ENCODE measurements at regions of chr1 and their contacts with region 1.

Region 1: DNA sequence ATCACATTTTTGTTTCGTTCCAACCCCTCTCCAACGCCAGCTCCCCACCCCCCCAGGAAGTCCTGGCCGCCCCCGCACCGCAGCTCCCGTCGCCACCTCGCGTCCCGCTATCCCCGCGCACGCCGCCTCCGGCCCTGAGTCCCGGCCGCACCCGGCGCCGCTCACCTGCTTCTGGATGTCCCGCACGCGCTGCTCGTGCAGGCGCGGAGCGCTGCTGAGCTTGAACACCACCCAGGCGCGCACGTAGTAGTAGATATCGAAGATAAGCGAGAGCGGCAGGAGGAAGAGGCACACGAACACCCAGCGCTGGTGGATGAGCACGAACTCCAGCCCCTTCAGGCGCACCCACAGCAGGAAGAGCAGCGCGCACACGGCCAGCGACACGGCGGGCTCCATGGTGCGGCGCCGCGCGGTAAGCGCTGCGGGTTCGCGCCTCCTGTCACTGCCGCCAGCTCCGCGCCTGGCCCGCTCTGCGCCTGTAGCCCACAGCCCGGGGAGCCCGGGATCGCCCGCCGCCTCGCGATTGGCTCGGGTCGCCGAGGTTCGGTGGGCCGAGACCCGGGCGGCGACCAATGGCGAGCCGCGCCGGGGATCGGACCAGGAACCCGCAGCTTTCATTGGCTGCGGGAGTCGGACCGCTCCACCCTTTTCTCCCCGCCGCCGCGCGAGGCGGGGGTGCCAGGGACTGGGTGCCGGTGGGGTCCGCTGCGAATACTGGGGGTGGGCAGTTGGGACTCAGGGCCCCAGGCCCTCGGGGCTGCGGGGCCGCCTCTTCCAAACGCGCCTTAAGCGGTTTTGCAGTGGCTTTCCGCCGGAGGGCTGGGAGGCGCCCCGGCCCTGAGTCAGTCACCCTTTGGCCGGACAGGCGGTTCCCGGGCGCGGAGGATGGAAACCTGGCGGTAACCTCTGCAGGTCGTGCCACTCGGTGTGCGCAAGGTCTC is at the start of gene DHCR24:
- DNase-seq: peak; percentile 90
- ATAC-seq: peak; percentile 79
- H3K4me3 ChIP-seq: peak within 1 kb of the TSS; percentile 90
- H3K27ac ChIP-seq: peak within 1 kb of the TSS; percentile 96
- H3K4me1 ChIP-seq: peaks cover 49% of the 10 kb centered on the region
- H3K27me3 ChIP-seq: no peaks in the 10 kb centered on the region
- CTCF ChIP-seq: no peak
- total RNA-seq, gene DHCR24: 166 TPM in 2 replicates

Region 2: GRCh38 chr1:54857741-54858627 is 29.0 kb before region 1 on chr1:
- CTCF ChIA-PET with region 1: interaction called, 3 read pairs
- POLR2A ChIA-PET with region 1: no interaction called
- intact Hi-C with region 1: loop called (anchors 2 kb)
- DNase-seq: peak; percentile 89
- ATAC-seq: peak; percentile 73
- H3K4me3 ChIP-seq: no peak overlapping the region
- H3K27ac ChIP-seq: peak overlapping the region; percentile 89
- H3K4me1 ChIP-seq: peaks cover 49% of the 10 kb centered on the region
- H3K27me3 ChIP-seq: no peaks in the 10 kb centered on the region
- CTCF ChIP-seq: no peak

Region 3: GRCh38 chr1:54872036-54872331 is 15.0 kb before region 1 on chr1:
- CTCF ChIA-PET with region 1: no interaction called
- POLR2A ChIA-PET with region 1: no interaction called
- intact Hi-C with region 1: loop called (anchors 1 kb)
- DNase-seq: no peak
- ATAC-seq: no peak
- H3K4me3 ChIP-seq: no peak overlapping the region
- H3K27ac ChIP-seq: no peak overlapping the region
- H3K4me1 ChIP-seq: peaks cover 48% of the 10 kb centered on the region
- H3K27me3 ChIP-seq: no peaks in the 10 kb centered on the region
- CTCF ChIP-seq: no peak; the same call in 1 of the 2 replicates

Region 4: GRCh38 chr1:54934869-54935268 is 47.9 kb after region 1 on chr1:
- CTCF ChIA-PET with region 1: interaction called, 5 read pairs
- POLR2A ChIA-PET with region 1: interaction called, 4 read pairs
- intact Hi-C with region 1: loop called (anchors 1 kb)
- DNase-seq: peak; percentile 89
- ATAC-seq: peak; percentile 97
- H3K4me3 ChIP-seq: no peak overlapping the region
- H3K27ac ChIP-seq: peak overlapping the region; percentile 55
- H3K4me1 ChIP-seq: peaks cover 25% of the 10 kb centered on the region
- H3K27me3 ChIP-seq: no peaks in the 10 kb centered on the region
- CTCF ChIP-seq: no peak

Region 5: DNA sequence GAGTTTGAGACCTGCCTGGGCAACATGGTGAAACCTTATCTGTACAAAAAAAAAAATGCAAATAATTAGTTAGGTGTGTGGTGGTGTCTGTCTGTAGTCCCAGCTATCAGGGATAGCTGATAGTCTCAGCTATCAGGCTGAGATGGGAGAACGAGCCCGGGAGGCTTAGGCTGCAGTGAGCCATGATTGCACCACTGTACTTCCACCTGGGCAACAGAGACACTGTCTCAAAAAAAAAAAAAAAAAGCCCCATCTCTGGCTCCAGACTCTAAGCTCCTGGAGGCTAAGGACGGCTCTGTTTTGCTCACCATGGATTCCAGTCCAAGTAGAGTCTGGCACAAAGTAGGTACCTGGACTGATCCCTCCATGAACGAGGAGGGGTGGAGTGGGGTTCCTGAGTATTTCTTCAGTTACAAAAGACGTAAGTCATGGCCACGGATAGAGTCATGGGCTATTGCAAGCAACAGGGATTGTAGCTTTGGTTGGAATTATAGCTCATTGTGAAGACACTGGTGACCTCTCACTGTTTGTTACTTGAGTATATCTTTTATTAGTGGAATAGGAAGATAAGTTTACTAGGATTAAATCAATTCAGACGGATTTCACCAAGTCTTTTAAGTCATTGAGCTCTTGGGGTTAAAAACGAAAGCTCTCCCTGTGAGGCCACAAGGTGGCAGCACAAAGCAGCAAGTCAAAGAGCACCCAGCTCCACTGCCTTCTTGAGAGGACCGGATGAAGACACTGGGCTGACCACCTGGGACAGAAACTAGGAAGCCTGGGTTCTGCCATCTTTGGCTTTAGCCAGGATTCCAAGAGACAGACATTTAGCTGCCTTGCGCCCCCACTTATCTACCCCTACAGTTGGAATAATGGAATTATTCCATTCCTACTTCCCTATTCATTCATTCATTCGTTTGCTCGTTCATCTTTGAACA is 57.9 kb after region 1 on chr1:
- CTCF ChIA-PET with region 1: interaction called, 7 read pairs
- POLR2A ChIA-PET with region 1: no interaction called
- intact Hi-C with region 1: loop called (anchors 2 kb)
- DNase-seq: peak; percentile 89
- ATAC-seq: peak; percentile 65
- H3K4me3 ChIP-seq: no peak overlapping the region
- H3K27ac ChIP-seq: peak overlapping the region; percentile 52
- H3K4me1 ChIP-seq: peaks cover 22% of the 10 kb centered on the region
- H3K27me3 ChIP-seq: no peaks in the 10 kb centered on the region
- CTCF ChIP-seq: peak; percentile 93

Region 6: DNA sequence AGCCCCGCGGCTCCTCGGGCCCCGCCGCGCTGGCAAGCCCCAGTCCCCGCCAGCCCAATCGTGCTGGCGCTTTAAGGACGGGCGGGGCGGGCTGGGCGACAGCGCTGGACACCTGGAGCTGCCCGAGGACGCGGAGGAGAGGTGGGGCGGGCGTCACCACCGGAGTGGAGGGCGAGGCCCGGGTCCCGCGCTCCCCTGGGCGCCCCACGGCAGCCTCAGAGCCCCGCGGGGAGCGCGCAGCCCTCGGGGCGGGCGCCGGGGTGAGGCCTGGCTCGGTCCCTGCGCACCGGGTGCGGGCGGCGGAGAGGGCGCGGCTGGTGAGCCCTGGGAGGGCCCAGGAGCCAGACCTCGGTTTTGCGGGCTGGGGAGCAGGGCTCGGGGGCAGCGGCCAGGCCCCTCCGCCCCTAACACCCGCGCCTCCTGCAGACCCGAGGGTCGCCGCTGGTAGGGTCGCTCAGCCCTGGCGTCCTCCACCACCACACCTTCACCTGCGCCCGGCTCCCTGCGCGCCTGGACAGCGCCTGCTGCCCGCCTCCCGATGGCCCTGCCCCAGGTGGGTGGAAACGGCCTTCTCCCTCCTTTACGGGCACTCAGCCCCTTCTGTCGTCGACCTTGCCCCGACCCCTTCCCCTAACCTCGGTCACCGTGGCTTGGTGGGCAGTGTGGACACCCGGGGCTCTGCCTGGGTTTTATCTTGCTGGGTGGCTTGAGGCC is 93.7 kb after region 1 on chr1 and contains the start of gene TMEM61:
- CTCF ChIA-PET with region 1: no interaction called
- POLR2A ChIA-PET with region 1: no interaction called
- intact Hi-C with region 1: no loop called
- DNase-seq: peak; percentile 50
- ATAC-seq: peak; percentile 83
- H3K4me3 ChIP-seq: peak within 1 kb of the TSS; percentile 72
- H3K27ac ChIP-seq: no peak within 1 kb of the TSS
- H3K4me1 ChIP-seq: peaks cover 13% of the 10 kb centered on the region
- H3K27me3 ChIP-seq: no peaks in the 10 kb centered on the region
- CTCF ChIP-seq: no peak
- total RNA-seq, gene TMEM61: 0.95 and 3.8 TPM in 2 replicates

Region 7: GRCh38 chr1:55071477-55071876 is 184.5 kb after region 1 on chr1:
- CTCF ChIA-PET with region 1: no interaction called
- POLR2A ChIA-PET with region 1: no interaction called
- intact Hi-C with region 1: no loop called
- DNase-seq: peak; percentile 74
- ATAC-seq: peak; percentile 96
- H3K4me3 ChIP-seq: no peak overlapping the region
- H3K27ac ChIP-seq: no peak overlapping the region
- H3K4me1 ChIP-seq: no peaks in the 10 kb centered on the region
- H3K27me3 ChIP-seq: no peaks in the 10 kb centered on the region
- CTCF ChIP-seq: peak; percentile 74

Measured in PC-3 (cell line).